ENCODE measurements at regions of chr7 and their contacts with region 1.

Region 1: DNA sequence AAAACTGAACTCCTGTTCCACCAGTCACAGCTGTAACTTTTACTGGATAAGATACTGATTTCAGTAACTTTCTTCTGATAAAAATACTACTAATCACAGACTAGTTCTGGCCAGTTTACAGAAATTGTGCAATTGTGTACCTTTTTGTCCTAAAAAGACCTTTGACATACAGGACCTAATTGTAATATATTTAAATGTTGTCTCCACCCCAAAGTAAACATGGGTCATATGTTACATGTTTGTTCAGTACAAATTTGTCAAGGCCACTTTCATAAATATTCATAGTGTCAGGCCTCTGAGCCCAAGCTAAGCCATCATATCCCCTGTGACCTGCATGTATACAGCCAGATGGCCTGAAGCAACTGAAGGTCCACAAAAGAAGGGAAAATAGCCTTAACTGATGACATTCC is 27.0 kb upstream of the PIP start:
- DNase-seq: no peak
- ATAC-seq: no peak
- H3K4me3 Mint-ChIP-seq: no peak overlapping the region
- H3K27ac Mint-ChIP-seq: no peak overlapping the region
- H3K4me1 Mint-ChIP-seq: no peaks in the 10 kb centered on the region
- H3K27me3 Mint-ChIP-seq: no peaks in the 10 kb centered on the region
- CTCF ChIP-seq: no peak

Region 2: GRCh38 chr7:143049362-143049761 is 55.5 kb before region 1 on chr7:
- CTCF ChIA-PET with region 1: no interaction called
- POLR2A ChIA-PET with region 1: no interaction called
- intact Hi-C with region 1: no loop called
- DNase-seq: no peak
- ATAC-seq: peak; percentile 25
- H3K4me3 Mint-ChIP-seq: no peak overlapping the region
- H3K27ac Mint-ChIP-seq: peak overlapping the region; percentile 20
- H3K4me1 Mint-ChIP-seq: peaks cover 45% of the 10 kb centered on the region
- H3K27me3 Mint-ChIP-seq: no peaks in the 10 kb centered on the region
- CTCF ChIP-seq: no peak

Region 3: GRCh38 chr7:143924851-143925250 is 820.0 kb after region 1 on chr7:
- CTCF ChIA-PET with region 1: no interaction called
- POLR2A ChIA-PET with region 1: no interaction called
- intact Hi-C with region 1: no loop called
- DNase-seq: no peak
- ATAC-seq: no peak
- H3K4me3 Mint-ChIP-seq: no peak overlapping the region
- H3K27ac Mint-ChIP-seq: no peak overlapping the region
- H3K4me1 Mint-ChIP-seq: no peaks in the 10 kb centered on the region
- H3K27me3 Mint-ChIP-seq: peaks cover 25% of the 10 kb centered on the region
- CTCF ChIP-seq: no peak

Region 4: GRCh38 chr7:144656965-144657517 is 1552.2 kb after region 1 on chr7:
- CTCF ChIA-PET with region 1: no interaction called
- POLR2A ChIA-PET with region 1: no interaction called
- intact Hi-C with region 1: loop called (anchors 5 kb)
- DNase-seq: no peak
- ATAC-seq: no peak
- H3K4me3 Mint-ChIP-seq: no peak overlapping the region
- H3K27ac Mint-ChIP-seq: no peak overlapping the region
- H3K4me1 Mint-ChIP-seq: peaks cover 5% of the 10 kb centered on the region
- H3K27me3 Mint-ChIP-seq: no peaks in the 10 kb centered on the region
- CTCF ChIP-seq: no peak

Measured in activated B cell treated with CpG ODN at 0.5 μM for 24 hours (primary cell).